Activated CD4-positive, alpha-beta T cell treated with anti-CD3 and anti-CD28 coated beads for 36 hours (primary cell): ENCODE measurements at regions of chr11 and their contacts with region 1.

Region 1: DNA sequence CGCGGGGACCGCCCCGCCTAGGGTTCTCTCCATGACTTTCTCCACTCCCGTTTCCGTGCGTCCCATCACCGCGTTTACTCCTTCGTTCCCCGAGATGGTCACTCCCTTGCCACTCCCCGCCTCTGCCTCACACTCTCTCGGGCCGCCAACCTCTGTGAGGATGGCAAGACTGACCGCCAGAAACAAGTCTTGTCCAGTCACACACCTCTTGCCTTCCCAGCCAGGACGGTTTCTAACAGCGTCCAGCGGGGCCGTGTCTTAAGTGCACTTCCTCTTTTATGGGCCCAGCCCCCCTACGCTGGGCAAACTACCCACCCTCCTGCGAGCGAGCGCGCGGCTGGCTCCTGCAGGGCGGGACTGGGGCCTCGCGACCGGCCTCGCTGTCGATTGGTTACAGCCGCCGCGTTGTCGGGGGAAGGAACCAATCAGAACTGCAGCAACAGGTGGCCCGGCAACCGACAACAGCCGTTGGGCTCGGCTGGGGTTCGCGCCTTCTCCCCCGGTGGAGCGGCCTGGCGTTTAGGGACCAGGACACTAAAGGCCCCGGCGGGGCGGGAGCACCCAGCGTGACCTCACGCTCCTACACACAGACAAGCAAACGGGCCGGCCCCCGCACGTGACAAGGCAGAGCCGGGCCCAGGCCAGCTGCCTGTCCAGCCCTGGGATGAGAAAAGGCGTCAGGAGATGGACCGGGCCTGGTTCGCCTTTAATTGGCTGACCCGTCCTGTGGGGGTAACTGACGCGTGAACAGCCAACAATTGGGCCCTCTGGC is 512 bp upstream of the UCP2 start:
- DNase-seq: peak; percentile 96
- ATAC-seq: peak; percentile 84
- H3K4me3 Mint-ChIP-seq: peak overlapping the region; percentile 89
- H3K27ac Mint-ChIP-seq: peak overlapping the region; percentile 96
- H3K4me1 Mint-ChIP-seq: peaks cover 60% of the 10 kb centered on the region
- H3K27me3 Mint-ChIP-seq: no peaks in the 10 kb centered on the region

Region 2: GRCh38 chr11:73760679-73761402 is 222.3 kb before region 1 on chr11 and contains the start of gene RAB6A:
- CTCF ChIA-PET with region 1: no interaction called
- POLR2A ChIA-PET with region 1: no interaction called
- intact Hi-C with region 1: loop called in 1 of 2 experiments (anchors 1 kb)
- DNase-seq: peak; percentile 100
- ATAC-seq: peak; percentile 93
- H3K4me3 Mint-ChIP-seq: peak within 1 kb of the TSS; percentile 97
- H3K27ac Mint-ChIP-seq: peak within 1 kb of the TSS; percentile 86
- H3K4me1 Mint-ChIP-seq: peaks cover 22% of the 10 kb centered on the region
- H3K27me3 Mint-ChIP-seq: no peaks in the 10 kb centered on the region
- total RNA-seq, gene RAB6A: 57.9 to 58.9 TPM

Region 3: DNA sequence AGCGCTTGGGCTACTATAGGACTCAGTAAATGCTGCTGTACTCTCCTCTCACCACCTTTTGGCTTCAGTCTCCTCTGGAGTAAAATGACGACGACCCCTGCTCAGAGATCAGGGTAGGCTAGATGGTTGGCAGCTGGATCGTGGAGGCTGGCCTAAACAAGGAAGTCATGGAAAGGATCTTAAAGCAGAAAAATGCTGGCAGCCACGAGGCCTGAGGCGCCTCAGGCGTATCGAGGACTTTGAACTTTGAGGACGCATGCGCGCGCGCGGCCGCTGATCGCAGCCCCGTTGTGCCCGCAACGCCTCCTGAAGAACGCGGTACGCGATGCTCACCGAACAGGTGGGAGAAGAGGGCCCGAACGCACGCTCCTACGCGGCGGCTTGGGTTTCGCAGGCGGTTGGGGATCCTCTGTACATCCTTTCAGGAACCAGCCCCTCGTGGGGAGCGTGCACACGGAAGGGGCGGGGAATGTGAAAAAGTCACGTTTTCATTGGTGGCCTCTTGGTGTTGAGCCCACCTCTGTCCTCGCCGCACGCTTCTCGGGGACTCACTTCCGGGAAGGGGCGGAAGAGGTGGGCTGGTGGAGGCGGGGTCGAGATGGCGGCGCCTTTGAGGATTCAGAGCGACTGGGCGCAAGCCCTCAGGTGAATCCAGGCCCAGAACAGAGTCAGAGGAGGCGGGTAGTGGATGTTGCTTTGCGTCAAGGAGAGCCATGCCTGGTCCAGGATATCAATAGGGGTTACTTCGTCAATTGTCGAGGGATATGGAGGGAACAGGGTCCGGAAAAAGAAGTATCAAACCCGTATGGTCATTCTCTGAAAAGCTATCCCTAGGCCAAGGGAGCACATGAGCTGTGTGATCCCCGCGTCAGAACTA is 106.5 kb before region 1 on chr11 and contains the starts of genes COA4 and PAAF1:
- CTCF ChIA-PET with region 1: no interaction called
- POLR2A ChIA-PET with region 1: interaction called, 3 read pairs
- intact Hi-C with region 1: loop called in 1 of 2 experiments (anchors 1 kb)
- DNase-seq: peak; percentile 97
- ATAC-seq: peak; percentile 95
- H3K4me3 Mint-ChIP-seq: peak within 1 kb of the TSS; percentile 93
- H3K27ac Mint-ChIP-seq: peak within 1 kb of the TSS; percentile 100
- H3K4me1 Mint-ChIP-seq: peaks cover 32% of the 10 kb centered on the region
- H3K27me3 Mint-ChIP-seq: no peaks in the 10 kb centered on the region
- total RNA-seq, gene COA4: 103 to 112 TPM
- total RNA-seq, gene PAAF1: 34.2 to 34.8 TPM

Region 4: GRCh38 chr11:74004759-74005615 is 21.8 kb after region 1 on chr11:
- CTCF ChIA-PET with region 1: interaction called, 5 read pairs
- POLR2A ChIA-PET with region 1: interaction called, 35 read pairs
- intact Hi-C with region 1: no loop called
- DNase-seq: peak; percentile 90
- ATAC-seq: peak; percentile 99
- H3K4me3 Mint-ChIP-seq: no peak overlapping the region
- H3K27ac Mint-ChIP-seq: peak overlapping the region; percentile 90
- H3K4me1 Mint-ChIP-seq: peaks cover 60% of the 10 kb centered on the region
- H3K27me3 Mint-ChIP-seq: no peaks in the 10 kb centered on the region

Region 5: GRCh38 chr11:74033046-74033445 is 49.9 kb after region 1 on chr11:
- CTCF ChIA-PET with region 1: no interaction called
- POLR2A ChIA-PET with region 1: interaction called, 10 read pairs
- intact Hi-C with region 1: no loop called
- DNase-seq: peak; percentile 9
- ATAC-seq: no peak
- H3K4me3 Mint-ChIP-seq: no peak overlapping the region
- H3K27ac Mint-ChIP-seq: no peak overlapping the region
- H3K4me1 Mint-ChIP-seq: peaks cover 18% of the 10 kb centered on the region
- H3K27me3 Mint-ChIP-seq: no peaks in the 10 kb centered on the region

Region 6: DNA sequence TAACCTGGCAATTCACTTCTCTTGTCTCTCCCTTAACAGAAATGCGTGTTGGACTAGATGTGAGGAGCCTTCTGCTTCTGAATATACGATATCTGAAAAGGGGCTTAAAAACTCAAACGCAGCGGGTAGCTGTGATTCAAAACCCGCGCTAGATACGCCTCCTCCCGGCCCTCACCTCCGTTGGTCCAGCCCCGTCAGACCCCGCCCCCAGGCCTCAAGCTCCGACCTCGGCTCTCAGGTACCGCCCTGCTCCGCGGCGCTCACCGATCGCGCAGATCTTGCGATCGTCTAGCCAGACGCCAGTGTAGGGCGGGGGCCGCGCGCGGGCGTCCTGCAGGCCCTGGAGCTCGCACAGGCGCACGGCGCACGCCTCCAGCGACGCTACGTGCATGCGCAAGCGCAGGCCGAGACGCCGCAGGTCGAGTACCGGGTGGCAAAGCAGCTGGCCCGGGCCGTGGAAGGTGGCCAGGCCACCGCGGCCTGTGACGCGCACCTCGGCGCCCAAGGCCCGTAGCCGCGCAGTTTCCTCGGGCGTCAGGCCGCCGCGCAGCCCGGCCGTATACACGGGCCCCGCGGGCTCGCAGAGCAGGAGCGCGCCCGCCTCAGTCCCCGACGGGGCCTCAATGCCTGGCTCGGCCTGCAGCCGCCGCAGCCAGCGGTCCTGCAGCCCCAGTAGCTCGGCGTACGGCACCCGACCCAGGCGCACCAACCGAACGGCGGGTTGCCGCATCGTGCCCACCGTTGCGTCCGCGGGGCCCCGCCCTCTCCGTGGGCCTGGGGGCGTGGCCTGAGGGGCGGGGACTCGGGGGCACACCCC is 510.0 kb after region 1 on chr11 and contains the start of gene LIPT2:
- CTCF ChIA-PET with region 1: no interaction called
- POLR2A ChIA-PET with region 1: no interaction called
- intact Hi-C with region 1: loop called in 1 of 2 experiments (anchors 1 kb)
- DNase-seq: peak; percentile 99
- ATAC-seq: peak; percentile 96
- H3K4me3 Mint-ChIP-seq: peak within 1 kb of the TSS; percentile 73
- H3K27ac Mint-ChIP-seq: peak within 1 kb of the TSS; percentile 86
- H3K4me1 Mint-ChIP-seq: peaks cover 22% of the 10 kb centered on the region
- H3K27me3 Mint-ChIP-seq: no peaks in the 10 kb centered on the region
- total RNA-seq, gene LIPT2: 4.2 to 5.0 TPM